ENCODE measurements at regions of chr19 and their contacts with region 1.

Region 1: DNA sequence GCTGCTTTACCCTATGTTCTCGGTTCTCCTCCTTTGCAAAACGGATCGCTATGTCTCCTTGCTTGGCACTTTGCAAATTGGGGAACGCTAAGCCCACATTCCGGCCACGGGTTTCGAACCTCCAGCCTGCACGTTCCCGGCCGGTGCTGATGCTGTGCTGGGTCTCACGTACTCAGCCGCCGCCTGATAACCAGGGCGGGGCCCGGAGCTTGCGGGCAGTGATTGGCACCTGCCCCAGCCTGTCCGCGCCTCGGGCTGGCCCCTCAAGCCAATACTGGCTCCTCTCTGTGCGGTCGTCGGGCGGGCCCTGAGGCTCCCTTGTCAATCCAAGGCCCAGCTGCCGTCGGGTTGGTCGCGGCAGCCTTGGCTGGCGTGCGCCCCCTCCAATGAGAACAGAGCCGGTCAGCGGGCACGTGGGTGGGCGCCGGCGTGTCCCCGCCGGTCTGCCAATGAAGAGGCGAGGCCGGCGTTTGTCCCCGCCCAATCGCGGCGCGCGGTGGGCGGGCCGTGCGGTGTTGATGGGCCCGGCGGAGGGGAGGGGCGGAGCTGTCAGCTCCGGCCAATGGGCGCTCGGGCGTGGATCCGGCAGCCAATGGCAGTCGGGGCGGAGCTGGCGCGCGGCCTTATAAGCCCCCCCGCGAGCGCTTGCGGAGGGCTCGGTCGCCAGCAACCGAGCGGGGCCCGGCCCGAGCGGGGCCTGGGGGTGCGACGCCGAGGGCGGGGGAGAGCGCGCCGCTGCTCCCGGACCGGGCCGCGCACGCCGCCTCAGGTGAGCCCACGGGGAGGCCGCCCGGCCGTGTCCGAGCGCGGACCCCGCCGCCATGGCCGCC is at the start of gene KDM4B:
- H3K4me3 ChIP-seq: peak within 1 kb of the TSS; percentile 71
- H3K27ac ChIP-seq: peak within 1 kb of the TSS; percentile 79; the same call in 1 of the 2 replicates
- H3K4me1 ChIP-seq: peaks cover 6% of the 10 kb centered on the region
- CTCF ChIP-seq: no peak

Region 2: GRCh38 chr19:4909897-4910593 is 58.6 kb before region 1 on chr19:
- CTCF ChIA-PET with region 1: interaction called, 6 read pairs
- POLR2A ChIA-PET with region 1: interaction called, 14 read pairs
- H3K4me3 ChIP-seq: peak overlapping the region; percentile 77
- H3K27ac ChIP-seq: peak overlapping the region; percentile 92
- H3K4me1 ChIP-seq: peaks cover 13% of the 10 kb centered on the region
- CTCF ChIP-seq: no peak

Region 3: DNA sequence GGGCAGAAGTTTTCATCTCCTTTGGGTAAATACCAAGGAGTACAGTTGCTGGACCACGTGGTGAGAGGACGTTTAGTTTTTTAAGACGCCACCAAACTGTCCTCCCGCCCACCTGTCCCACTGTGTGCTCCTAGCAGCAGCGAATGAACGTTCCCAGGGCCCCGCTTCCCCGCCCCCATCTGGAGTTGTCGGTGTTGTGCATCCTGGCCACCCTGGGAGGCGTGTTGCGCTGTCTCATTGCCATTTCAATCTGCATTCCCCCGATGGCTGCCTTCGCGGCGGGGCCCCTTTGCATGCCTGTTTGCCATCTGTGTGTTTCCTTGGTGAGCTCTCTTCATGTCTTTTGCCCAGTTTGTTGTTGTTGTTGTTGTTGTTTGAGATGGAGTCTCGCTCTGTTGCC is 76.4 kb after region 1 on chr19:
- CTCF ChIA-PET with region 1: no interaction called
- POLR2A ChIA-PET with region 1: no interaction called
- H3K4me3 ChIP-seq: no peak overlapping the region
- H3K27ac ChIP-seq: no peak overlapping the region
- H3K4me1 ChIP-seq: peaks cover 18% of the 10 kb centered on the region
- CTCF ChIP-seq: no peak

Measured in HEK293 (cell line).